ENCODE measurements at regions of chr1 and their contacts with region 1.

Region 1: DNA sequence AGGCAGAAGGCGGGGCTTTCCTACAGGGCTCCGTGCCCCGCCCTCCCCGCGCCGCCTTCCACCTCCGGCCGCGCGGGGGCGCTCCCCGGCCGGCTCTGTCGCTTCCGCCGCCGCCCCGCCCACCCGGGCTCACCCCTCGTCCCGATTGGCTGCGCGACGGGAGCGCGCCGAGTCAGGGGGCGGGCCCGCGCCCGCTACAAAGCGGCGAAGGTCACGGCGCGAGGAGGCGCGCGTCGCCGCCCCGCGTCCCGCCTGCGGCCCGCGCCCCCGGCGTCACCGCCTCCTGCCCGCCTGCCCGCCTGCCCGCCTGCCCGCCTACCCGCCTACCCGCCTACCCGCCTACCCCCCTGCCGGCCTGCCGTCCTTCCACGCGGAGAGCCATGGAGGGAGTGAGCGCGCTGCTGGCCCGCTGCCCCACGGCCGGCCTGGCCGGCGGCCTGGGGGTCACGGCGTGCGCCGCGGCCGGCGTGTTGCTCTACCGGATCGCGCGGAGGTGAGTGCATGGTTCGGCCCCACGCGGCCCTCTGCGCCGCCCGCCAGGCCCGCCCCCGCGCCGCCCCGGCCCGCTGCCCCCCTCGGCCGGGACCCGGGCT is at the start of gene TMEM201:
- DNase-seq: peak; percentile 95
- H3K4me3 Mint-ChIP-seq: peak within 1 kb of the TSS; percentile 82
- H3K27ac Mint-ChIP-seq: peak within 1 kb of the TSS; percentile 35
- H3K4me1 Mint-ChIP-seq: peaks cover 31% of the 10 kb centered on the region
- H3K27me3 Mint-ChIP-seq: no peaks in the 10 kb centered on the region
- total RNA-seq, gene TMEM201: 12.2 to 14.0 TPM

Region 2: DNA sequence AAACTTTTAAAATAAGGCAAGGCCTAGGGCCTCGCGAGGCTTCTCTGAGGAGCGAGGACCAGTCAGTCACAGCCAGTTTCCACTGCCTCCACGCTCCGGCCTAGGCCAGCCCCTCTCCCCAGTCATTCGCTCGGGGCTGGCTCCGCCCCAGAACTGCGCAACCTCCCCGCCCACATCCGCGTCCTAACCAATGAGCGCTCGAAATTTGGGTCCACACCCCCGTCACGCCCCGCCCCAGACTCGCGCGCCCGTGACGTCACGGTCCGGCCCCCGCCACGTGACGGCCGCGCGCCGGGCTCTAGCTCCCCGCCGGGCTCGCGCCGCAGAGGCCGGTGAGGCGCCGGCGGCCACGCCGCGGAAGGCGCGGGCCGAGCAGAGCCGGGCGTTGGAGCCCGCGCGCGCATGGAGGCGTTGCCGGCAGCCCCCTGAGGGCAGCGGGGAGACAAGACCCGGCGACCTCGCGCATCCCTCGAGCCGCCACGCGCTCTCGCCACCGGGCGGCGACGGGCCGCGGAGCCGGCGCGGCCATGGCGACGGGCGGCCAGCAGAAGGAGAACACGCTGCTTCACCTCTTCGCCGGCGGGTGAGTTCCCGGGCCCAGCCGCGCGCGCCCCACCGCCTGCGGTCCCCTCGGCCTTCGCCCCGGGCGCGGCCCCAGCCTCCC is 49.4 kb before region 1 on chr1 and contains the start of gene SLC25A33:
- CTCF ChIA-PET with region 1: no interaction called
- POLR2A ChIA-PET with region 1: interaction called, 3 read pairs
- intact Hi-C with region 1: loop called (anchors 1 kb)
- DNase-seq: peak; percentile 99
- H3K4me3 Mint-ChIP-seq: peak within 1 kb of the TSS; percentile 91
- H3K27ac Mint-ChIP-seq: peak within 1 kb of the TSS; percentile 77
- H3K4me1 Mint-ChIP-seq: peaks cover 33% of the 10 kb centered on the region
- H3K27me3 Mint-ChIP-seq: no peaks in the 10 kb centered on the region
- total RNA-seq, gene SLC25A33: 5.4 to 6.1 TPM

Region 3: GRCh38 chr1:9603766-9604753 is 15.4 kb after region 1 on chr1:
- CTCF ChIA-PET with region 1: no interaction called
- POLR2A ChIA-PET with region 1: no interaction called
- intact Hi-C with region 1: no loop called
- DNase-seq: no peak
- H3K4me3 Mint-ChIP-seq: no peak overlapping the region
- H3K27ac Mint-ChIP-seq: no peak overlapping the region
- H3K4me1 Mint-ChIP-seq: no peaks in the 10 kb centered on the region
- H3K27me3 Mint-ChIP-seq: no peaks in the 10 kb centered on the region

Region 4: GRCh38 chr1:9890224-9890731 is 301.6 kb after region 1 on chr1:
- CTCF ChIA-PET with region 1: no interaction called
- POLR2A ChIA-PET with region 1: no interaction called
- intact Hi-C with region 1: no loop called
- DNase-seq: no peak
- H3K4me3 Mint-ChIP-seq: no peak overlapping the region
- H3K27ac Mint-ChIP-seq: no peak overlapping the region
- H3K4me1 Mint-ChIP-seq: peaks cover 10% of the 10 kb centered on the region
- H3K27me3 Mint-ChIP-seq: no peaks in the 10 kb centered on the region

Measured in activated CD4-positive, alpha-beta memory T cell treated with anti-CD3 and anti-CD28 coated beads for 36 hours (primary cell).